ENCODE measurements at regions of chr5 and their contacts with region 1.

Region 1: GRCh38 chr5:12095808-12096281 is 191.6 kb upstream of the CTNND2 start:
- DNase-seq: no peak
- ATAC-seq: no peak
- H3K4me3 ChIP-seq: no peak overlapping the region
- H3K27ac ChIP-seq: no peak overlapping the region
- H3K4me1 ChIP-seq: no peaks in the 10 kb centered on the region
- H3K27me3 ChIP-seq: no peaks in the 10 kb centered on the region
- CTCF ChIP-seq: no peak

Region 2: DNA sequence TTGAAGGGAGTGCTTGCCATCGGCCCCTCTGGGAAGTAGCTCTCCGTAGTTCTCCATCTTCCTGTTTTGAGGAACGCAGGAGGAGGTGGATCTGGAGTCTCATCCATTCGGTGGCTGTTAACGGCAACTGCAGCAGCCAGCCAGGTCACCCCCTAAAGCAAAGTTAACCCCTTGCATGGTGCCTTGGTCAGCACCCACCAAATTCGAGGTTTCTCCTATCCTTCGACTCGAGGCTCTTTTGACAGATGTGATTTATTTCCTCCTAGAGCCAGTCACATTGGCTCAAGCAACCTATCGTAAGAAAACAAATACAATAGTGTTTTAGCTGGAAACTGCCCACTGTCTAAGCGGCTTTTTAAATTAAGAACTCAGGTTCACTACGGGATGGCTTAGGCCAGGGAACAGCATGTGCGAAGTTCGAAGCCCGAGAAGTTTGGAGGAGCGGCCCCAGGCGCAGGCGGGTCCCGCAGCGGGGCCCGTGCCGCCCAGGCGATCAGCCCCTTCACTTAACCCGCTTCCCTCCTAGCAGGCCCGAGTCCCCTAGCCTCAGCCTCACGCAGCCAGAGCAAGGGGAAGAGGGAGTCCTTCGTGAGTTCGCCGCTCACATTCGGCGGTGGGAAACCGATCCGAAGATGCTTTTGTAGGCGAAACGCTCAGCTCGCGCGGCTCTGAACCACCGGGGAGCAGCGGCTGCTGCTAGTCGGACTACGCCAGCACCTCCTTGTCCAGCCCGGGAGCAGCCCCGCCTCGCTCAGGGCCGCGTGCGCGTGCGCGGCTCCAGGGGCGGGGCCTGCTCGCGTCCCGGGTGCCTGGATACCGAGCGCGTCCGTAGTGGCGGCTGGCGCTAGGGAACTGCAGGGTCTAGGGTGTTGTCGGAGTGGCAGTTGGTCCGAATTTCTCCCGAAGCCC is 1654.5 kb before region 1 on chr5 and contains the start of gene ROPN1L:
- CTCF ChIA-PET with region 1: no interaction called
- POLR2A ChIA-PET with region 1: interaction called, 10 read pairs
- in situ Hi-C with region 1: no loop called
- intact Hi-C with region 1: no loop called
- DNase-seq: peak; percentile 77
- ATAC-seq: peak; percentile 97
- H3K4me3 ChIP-seq: peak within 1 kb of the TSS; percentile 66 to 87
- H3K27ac ChIP-seq: peak within 1 kb of the TSS; percentile 81
- H3K4me1 ChIP-seq: peaks cover 12% of the 10 kb centered on the region; the same call in 1 of the 2 replicates
- H3K27me3 ChIP-seq: no peaks in the 10 kb centered on the region
- CTCF ChIP-seq: no peak
- total RNA-seq, gene ROPN1L: 3.0 TPM

Region 3: DNA sequence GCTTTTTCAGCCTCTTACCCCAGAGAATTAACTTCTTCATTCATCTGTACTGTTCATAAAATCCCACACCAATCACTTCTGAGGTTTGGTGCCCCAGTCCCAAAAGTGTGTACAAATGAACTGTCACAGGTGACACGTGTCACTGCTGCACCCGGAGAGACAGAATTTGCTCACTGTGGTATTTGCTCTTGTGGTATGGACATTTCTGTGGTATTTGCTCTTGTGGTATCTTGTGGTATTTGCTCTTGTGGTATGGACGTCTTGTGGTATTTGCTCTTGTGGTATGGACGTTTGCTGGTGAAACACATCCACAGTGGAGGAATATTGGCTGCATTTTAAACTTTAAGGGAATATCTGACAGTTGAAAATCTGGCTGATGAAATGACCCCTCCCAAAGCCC is 1119.9 kb before region 1 on chr5:
- CTCF ChIA-PET with region 1: no interaction called
- POLR2A ChIA-PET with region 1: no interaction called
- in situ Hi-C with region 1: no loop called
- intact Hi-C with region 1: no loop called
- DNase-seq: no peak
- ATAC-seq: no peak
- H3K4me3 ChIP-seq: no peak overlapping the region
- H3K27ac ChIP-seq: no peak overlapping the region
- H3K4me1 ChIP-seq: no peaks in the 10 kb centered on the region
- H3K27me3 ChIP-seq: peaks cover 20% of the 10 kb centered on the region
- CTCF ChIP-seq: no peak

Region 4: DNA sequence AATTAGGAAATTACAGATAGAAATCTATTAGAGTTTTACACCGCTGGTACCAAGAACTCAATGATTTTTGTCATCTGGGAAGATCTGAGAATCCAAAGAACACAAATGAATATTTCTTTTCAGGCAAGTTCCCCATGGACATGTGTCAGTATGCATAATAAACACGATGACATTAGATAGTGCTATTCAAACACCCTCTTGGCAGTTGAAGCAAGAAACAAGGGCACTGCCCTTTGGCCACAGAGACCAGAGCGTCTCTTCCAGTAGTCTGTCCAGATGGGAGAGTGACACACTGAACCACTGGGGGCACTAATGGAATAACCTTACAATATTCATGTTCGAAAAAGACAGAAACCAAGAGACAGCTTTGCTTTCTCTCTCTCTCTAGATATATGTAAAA is 493.6 kb before region 1 on chr5:
- CTCF ChIA-PET with region 1: no interaction called
- POLR2A ChIA-PET with region 1: no interaction called
- in situ Hi-C with region 1: no loop called
- intact Hi-C with region 1: no loop called
- DNase-seq: no peak
- ATAC-seq: no peak
- H3K4me3 ChIP-seq: no peak overlapping the region
- H3K27ac ChIP-seq: no peak overlapping the region
- H3K4me1 ChIP-seq: no peaks in the 10 kb centered on the region
- H3K27me3 ChIP-seq: no peaks in the 10 kb centered on the region
- CTCF ChIP-seq: no peak

Region 5: DNA sequence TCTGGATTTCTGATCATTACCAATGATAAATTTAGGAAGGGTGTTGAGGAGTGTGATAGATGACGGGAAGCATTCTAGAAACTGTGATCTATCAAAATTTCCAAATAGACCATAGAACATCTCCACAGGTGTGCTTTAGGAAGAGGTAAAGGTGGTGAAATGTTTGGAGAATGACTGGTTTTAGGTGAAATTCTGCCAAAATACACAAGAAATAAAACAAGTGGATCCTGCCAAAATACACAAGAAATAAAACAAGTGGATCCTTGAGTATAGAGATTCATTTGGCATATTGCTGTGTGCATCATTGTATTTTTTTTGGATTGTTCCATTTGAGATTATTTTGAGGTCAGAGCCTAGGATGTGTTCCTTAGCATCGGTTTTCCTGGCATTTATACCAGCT is 103.3 kb before region 1 on chr5:
- CTCF ChIA-PET with region 1: no interaction called
- POLR2A ChIA-PET with region 1: no interaction called
- in situ Hi-C with region 1: no loop called
- intact Hi-C with region 1: no loop called
- DNase-seq: no peak
- ATAC-seq: no peak
- H3K4me3 ChIP-seq: no peak overlapping the region
- H3K27ac ChIP-seq: no peak overlapping the region
- H3K4me1 ChIP-seq: no peaks in the 10 kb centered on the region
- H3K27me3 ChIP-seq: no peaks in the 10 kb centered on the region
- CTCF ChIP-seq: no peak

Region 6: GRCh38 chr5:12204761-12205160 is 108.9 kb after region 1 on chr5:
- CTCF ChIA-PET with region 1: no interaction called
- POLR2A ChIA-PET with region 1: no interaction called
- in situ Hi-C with region 1: no loop called
- intact Hi-C with region 1: no loop called
- DNase-seq: no peak
- ATAC-seq: no peak
- H3K4me3 ChIP-seq: no peak overlapping the region
- H3K27ac ChIP-seq: no peak overlapping the region
- H3K4me1 ChIP-seq: no peaks in the 10 kb centered on the region
- H3K27me3 ChIP-seq: no peaks in the 10 kb centered on the region
- CTCF ChIP-seq: no peak

Measured in Panc1 (cell line).